Left cardiac atrium (tissue), 4 donors: ENCODE measurements at regions of chr6 and their contacts with region 1.

Region 1: DNA sequence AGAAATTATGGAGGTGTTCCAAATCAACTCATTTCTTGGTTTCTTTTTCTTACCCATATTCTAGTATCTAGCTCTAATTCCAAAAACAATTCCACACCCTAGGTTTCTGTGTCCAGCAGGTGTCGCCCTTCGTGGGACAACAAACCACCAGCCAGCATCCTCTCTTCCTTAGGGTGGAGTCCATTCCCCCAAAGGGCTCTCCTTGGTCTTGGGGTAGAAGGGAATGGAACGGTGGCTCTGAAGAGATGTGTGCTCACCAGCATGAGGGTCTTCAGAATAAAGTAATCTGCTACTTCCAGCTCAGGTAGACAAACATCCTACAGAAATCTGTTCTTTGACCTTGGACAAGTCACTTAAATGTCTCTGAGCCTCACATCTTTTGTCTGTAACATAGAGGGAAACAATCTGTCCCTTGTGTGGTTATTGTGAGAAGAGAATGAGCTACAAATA is 7.2 kb downstream of the HLA-DMB start:
- DNase-seq: peak; percentile 85
- ATAC-seq: peak; percentile 65 to 67

Region 2: GRCh38 chr6:32716399-32716798 is 217.3 kb before region 1 on chr6:
- intact Hi-C with region 1: no loop called
- DNase-seq: no peak
- ATAC-seq: no peak

Region 3: GRCh38 chr6:32885698-32886286 is 47.9 kb before region 1 on chr6:
- intact Hi-C with region 1: loop called in 1 of 2 experiments (anchors 1 kb)
- DNase-seq: no peak
- ATAC-seq: peak; percentile 42 to 59

Region 4: DNA sequence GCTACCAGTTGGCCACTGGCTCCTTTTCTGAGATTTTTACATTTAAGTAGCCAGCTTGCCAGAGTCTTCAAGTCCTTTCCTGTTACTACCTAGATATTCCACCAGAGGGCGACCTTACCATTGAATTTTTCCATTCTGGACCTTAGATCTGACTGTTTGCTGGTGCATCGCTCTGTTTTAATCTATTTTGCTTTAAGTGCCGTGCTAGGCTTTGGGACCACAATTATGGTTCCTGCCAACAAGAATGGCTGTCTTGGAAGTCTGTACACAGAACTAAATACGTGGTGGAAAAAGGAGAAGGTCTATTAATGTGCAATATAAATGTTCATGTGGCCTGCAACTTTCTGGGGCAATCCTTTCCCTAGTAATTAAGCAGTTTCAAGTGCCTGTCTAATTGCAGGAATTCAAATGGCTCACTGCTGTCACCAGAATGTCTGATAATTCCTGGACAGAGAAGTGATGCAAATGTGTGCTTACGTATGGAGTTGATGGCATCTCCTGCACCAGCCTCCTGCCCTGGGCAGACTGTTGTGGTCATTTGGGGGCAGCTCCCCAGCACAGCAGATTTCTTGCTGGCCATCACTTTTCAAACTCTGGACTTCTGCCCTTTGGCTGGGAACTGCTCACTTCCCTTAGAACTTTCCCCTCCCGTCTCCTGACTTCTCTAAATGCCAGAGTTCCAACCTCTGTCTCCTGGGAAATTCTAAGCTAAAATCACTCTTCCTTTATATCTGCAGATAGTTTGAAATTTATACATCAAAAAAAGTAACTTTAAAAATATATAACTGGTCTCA is 81.4 kb after region 1 on chr6:
- intact Hi-C with region 1: no loop called
- DNase-seq: no peak
- ATAC-seq: peak; percentile 62 to 71